ENCODE measurements at regions of chr3 and their contacts with region 1.

Region 1: GRCh38 chr3:43690400-43691119 is at the start of gene ABHD5:
- DNase-seq: peak; percentile 90 to 96 (median 93)
- H3K4me3 ChIP-seq: peak within 1 kb of the TSS; percentile 77 to 91 (median 90)
- H3K4me3 Mint-ChIP-seq: peak within 1 kb of the TSS; percentile 88 to 93
- H3K27ac ChIP-seq: peak within 1 kb of the TSS; percentile 76 to 84
- H3K27ac Mint-ChIP-seq: peak within 1 kb of the TSS; percentile 86 to 94 (median 91)
- H3K4me1 ChIP-seq: peaks cover 37 to 50% of the 10 kb centered on the region in 2 donors
- H3K4me1 Mint-ChIP-seq: peaks cover 45% of the 10 kb centered on the region
- H3K27me3 ChIP-seq: no peaks in the 10 kb centered on the region
- H3K27me3 Mint-ChIP-seq: peaks cover 0 to 7% (median 5%) of the 10 kb centered on the region in 3 donors
- CTCF ChIP-seq: peak; percentile 11
- polyA plus RNA-seq, gene ABHD5: 32.9 to 40.0 (median 34.5) TPM

Region 2: GRCh38 chr3:43286115-43286840 is 404.3 kb before region 1 on chr3 and contains the start of gene SNRK:
- intact Hi-C with region 1: loop called in 1 of 2 experiments (anchors 10 kb)
- DNase-seq: peak; percentile 68 to 82 (median 78)
- H3K4me3 ChIP-seq: peak within 1 kb of the TSS; percentile 85 to 100 (median 92)
- H3K4me3 Mint-ChIP-seq: peak within 1 kb of the TSS; percentile 91 to 99
- H3K27ac ChIP-seq: peak within 1 kb of the TSS; percentile 50 to 92
- H3K27ac Mint-ChIP-seq: peak within 1 kb of the TSS; percentile 91 to 99 (median 97)
- H3K4me1 ChIP-seq: peaks cover 43 to 47% of the 10 kb centered on the region in 2 donors
- H3K4me1 Mint-ChIP-seq: peaks cover 36% of the 10 kb centered on the region
- H3K27me3 ChIP-seq: no peaks in the 10 kb centered on the region
- H3K27me3 Mint-ChIP-seq: no peaks in the 10 kb centered on the region
- CTCF ChIP-seq: peak; percentile 31
- polyA plus RNA-seq, gene SNRK: 12.8 to 19.7 (median 16.1) TPM

Region 3: GRCh38 chr3:43621656-43622432 is 68.7 kb before region 1 on chr3 and contains the start of gene ANO10:
- intact Hi-C with region 1: loop called (anchors 2 to 5 kb)
- DNase-seq: peak; percentile 97 to 99 (median 99)
- H3K4me3 ChIP-seq: peak within 1 kb of the TSS; percentile 76 to 92 (median 79)
- H3K4me3 Mint-ChIP-seq: peak within 1 kb of the TSS; percentile 92 to 97
- H3K27ac ChIP-seq: peak within 1 kb of the TSS; percentile 71 to 78
- H3K27ac Mint-ChIP-seq: peak within 1 kb of the TSS; percentile 90 to 95 (median 92)
- H3K4me1 ChIP-seq: peaks cover 20 to 35% of the 10 kb centered on the region in 2 donors
- H3K4me1 Mint-ChIP-seq: peaks cover 35% of the 10 kb centered on the region
- H3K27me3 ChIP-seq: no peaks in the 10 kb centered on the region
- H3K27me3 Mint-ChIP-seq: peaks cover 0 to 4% (median 2%) of the 10 kb centered on the region in 3 donors
- CTCF ChIP-seq: no peak
- polyA plus RNA-seq, gene ANO10: 11.2 to 24.8 (median 21.6) TPM

Region 4: GRCh38 chr3:43707998-43708397 is 17.4 kb after region 1 on chr3:
- intact Hi-C with region 1: loop called in 1 of 2 experiments (anchors 1 kb)
- DNase-seq: peak; percentile 39 to 79 (median 68)
- H3K4me3 ChIP-seq: peak overlapping the region in 1 of 3 experiments; percentile 2
- H3K4me3 Mint-ChIP-seq: no peak overlapping the region
- H3K27ac ChIP-seq: peak overlapping the region in 1 of 2 donors; percentile 86
- H3K27ac Mint-ChIP-seq: peak overlapping the region; percentile 51 to 91 (median 79)
- H3K4me1 ChIP-seq: peaks cover 26 to 27% of the 10 kb centered on the region in 2 donors
- H3K4me1 Mint-ChIP-seq: peaks cover 28% of the 10 kb centered on the region
- H3K27me3 ChIP-seq: no peaks in the 10 kb centered on the region
- H3K27me3 Mint-ChIP-seq: peaks cover 0 to 6% (median 0%) of the 10 kb centered on the region in 3 donors
- CTCF ChIP-seq: no peak

Measured in CD14-positive monocyte (primary cell).